Naive thymus-derived CD4-positive, alpha-beta T cell (primary cell): ENCODE measurements at regions of chr11 and their contacts with region 1.

Region 1: GRCh38 chr11:85595285-85595884 is 31.8 kb downstream of the DLG2 start:
- DNase-seq: peak in 7 of 9 donors; percentile 19 to 65 (median 49)
- ATAC-seq: peak; percentile 73
- H3K4me3 ChIP-seq: no peak overlapping the region
- H3K4me3 Mint-ChIP-seq: no peak overlapping the region
- H3K27ac ChIP-seq: no peak overlapping the region
- H3K27ac Mint-ChIP-seq: no peak overlapping the region
- H3K4me1 ChIP-seq: no peaks in the 10 kb centered on the region
- H3K4me1 Mint-ChIP-seq: no peaks in the 10 kb centered on the region
- H3K27me3 ChIP-seq: no peaks in the 10 kb centered on the region
- H3K27me3 Mint-ChIP-seq: peaks cover 0 to 19% (median 0%) of the 10 kb centered on the region in 5 donors

Region 2: GRCh38 chr11:84558085-84558905 is 1037.1 kb before region 1 on chr11:
- CTCF ChIA-PET with region 1: no interaction called
- POLR2A ChIA-PET with region 1: no interaction called
- intact Hi-C with region 1: loop called in 1 of 2 experiments (anchors 5 kb)
- DNase-seq: peak in 2 of 9 donors; percentile 1 to 11
- ATAC-seq: no peak
- H3K4me3 ChIP-seq: no peak overlapping the region
- H3K4me3 Mint-ChIP-seq: no peak overlapping the region
- H3K27ac ChIP-seq: no peak overlapping the region
- H3K27ac Mint-ChIP-seq: no peak overlapping the region
- H3K4me1 ChIP-seq: no peaks in the 10 kb centered on the region
- H3K4me1 Mint-ChIP-seq: no peaks in the 10 kb centered on the region
- H3K27me3 ChIP-seq: no peaks in the 10 kb centered on the region
- H3K27me3 Mint-ChIP-seq: no peaks in the 10 kb centered on the region

Region 3: GRCh38 chr11:85485902-85486301 is 109.5 kb before region 1 on chr11:
- CTCF ChIA-PET with region 1: no interaction called
- POLR2A ChIA-PET with region 1: no interaction called
- intact Hi-C with region 1: no loop called
- DNase-seq: no peak
- ATAC-seq: no peak
- H3K4me3 ChIP-seq: no peak overlapping the region
- H3K4me3 Mint-ChIP-seq: no peak overlapping the region
- H3K27ac ChIP-seq: no peak overlapping the region
- H3K27ac Mint-ChIP-seq: no peak overlapping the region
- H3K4me1 ChIP-seq: no peaks in the 10 kb centered on the region
- H3K4me1 Mint-ChIP-seq: no peaks in the 10 kb centered on the region
- H3K27me3 ChIP-seq: no peaks in the 10 kb centered on the region
- H3K27me3 Mint-ChIP-seq: no peaks in the 10 kb centered on the region

Region 4: GRCh38 chr11:85558411-85558810 is 37.0 kb before region 1 on chr11:
- CTCF ChIA-PET with region 1: no interaction called
- POLR2A ChIA-PET with region 1: no interaction called
- intact Hi-C with region 1: no loop called
- DNase-seq: no peak
- ATAC-seq: no peak
- H3K4me3 ChIP-seq: no peak overlapping the region
- H3K4me3 Mint-ChIP-seq: no peak overlapping the region
- H3K27ac ChIP-seq: no peak overlapping the region
- H3K27ac Mint-ChIP-seq: no peak overlapping the region
- H3K4me1 ChIP-seq: no peaks in the 10 kb centered on the region
- H3K4me1 Mint-ChIP-seq: no peaks in the 10 kb centered on the region
- H3K27me3 ChIP-seq: no peaks in the 10 kb centered on the region
- H3K27me3 Mint-ChIP-seq: peaks cover 0 to 10% (median 2%) of the 10 kb centered on the region in 5 donors

Region 5: GRCh38 chr11:85572056-85572455 is 23.3 kb before region 1 on chr11:
- CTCF ChIA-PET with region 1: no interaction called
- POLR2A ChIA-PET with region 1: no interaction called
- intact Hi-C with region 1: no loop called
- DNase-seq: no peak
- ATAC-seq: no peak
- H3K4me3 ChIP-seq: no peak overlapping the region
- H3K4me3 Mint-ChIP-seq: no peak overlapping the region
- H3K27ac ChIP-seq: no peak overlapping the region
- H3K27ac Mint-ChIP-seq: no peak overlapping the region
- H3K4me1 ChIP-seq: no peaks in the 10 kb centered on the region
- H3K4me1 Mint-ChIP-seq: peaks cover 0 to 4% (median 0%) of the 10 kb centered on the region in 7 donors
- H3K27me3 ChIP-seq: no peaks in the 10 kb centered on the region
- H3K27me3 Mint-ChIP-seq: peaks cover 3 to 27% (median 16%) of the 10 kb centered on the region in 5 donors

Region 6: DNA sequence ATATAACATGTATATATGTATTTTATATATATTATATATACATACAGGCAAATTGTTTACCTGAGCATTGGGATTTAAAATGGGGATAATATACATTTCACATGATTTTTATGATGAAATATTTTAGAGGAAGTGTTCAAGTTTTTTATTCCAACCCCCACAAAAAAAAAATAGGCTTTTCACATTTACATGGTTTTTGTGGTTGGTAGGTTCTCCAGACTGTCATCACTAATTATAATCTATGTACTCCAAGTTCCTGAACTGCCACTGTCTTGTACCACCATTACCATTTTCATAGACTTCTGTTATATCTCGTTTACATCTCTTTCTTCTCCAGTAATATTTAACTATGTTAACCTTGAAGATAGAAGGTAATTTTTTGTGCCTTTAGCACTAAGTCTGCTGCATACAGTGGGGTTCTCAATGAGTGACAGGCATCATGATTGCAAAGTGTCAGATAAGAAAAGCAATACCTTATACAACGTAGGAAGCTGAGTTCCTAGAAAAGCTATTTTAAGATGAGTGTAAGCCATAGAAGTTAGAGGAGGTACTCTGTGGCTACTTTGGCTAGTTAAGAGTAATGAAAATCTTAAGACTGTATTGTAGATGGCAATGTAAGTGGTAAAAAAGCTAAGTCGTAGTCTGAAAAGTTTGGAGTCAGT is 57.5 kb after region 1 on chr11:
- CTCF ChIA-PET with region 1: no interaction called
- POLR2A ChIA-PET with region 1: no interaction called
- intact Hi-C with region 1: no loop called
- DNase-seq: no peak
- ATAC-seq: no peak
- H3K4me3 ChIP-seq: no peak overlapping the region
- H3K4me3 Mint-ChIP-seq: no peak overlapping the region
- H3K27ac ChIP-seq: no peak overlapping the region
- H3K27ac Mint-ChIP-seq: peak overlapping the region in 4 of 9 donors; percentile 1 to 18 (median 10)
- H3K4me1 ChIP-seq: peaks cover 6 to 7% of the 10 kb centered on the region in 2 donors
- H3K4me1 Mint-ChIP-seq: peaks cover 10 to 58% (median 47%) of the 10 kb centered on the region in 7 donors
- H3K27me3 ChIP-seq: no peaks in the 10 kb centered on the region
- H3K27me3 Mint-ChIP-seq: no peaks in the 10 kb centered on the region

Region 7: GRCh38 chr11:85664615-85665481 is 69.5 kb after region 1 on chr11 and contains the start of gene CREBZF:
- CTCF ChIA-PET with region 1: no interaction called
- POLR2A ChIA-PET with region 1: no interaction called
- intact Hi-C with region 1: loop called (anchors 1 kb)
- DNase-seq: peak; percentile 83 to 96 (median 92)
- ATAC-seq: peak; percentile 85
- H3K4me3 ChIP-seq: peak within 1 kb of the TSS; percentile 97
- H3K4me3 Mint-ChIP-seq: peak within 1 kb of the TSS; percentile 93 to 100 (median 99)
- H3K27ac ChIP-seq: peak within 1 kb of the TSS; percentile 99
- H3K27ac Mint-ChIP-seq: peak within 1 kb of the TSS; percentile 96 to 100 (median 99)
- H3K4me1 ChIP-seq: peaks cover 19 to 31% of the 10 kb centered on the region in 2 donors
- H3K4me1 Mint-ChIP-seq: peaks cover 29 to 55% (median 39%) of the 10 kb centered on the region in 7 donors
- H3K27me3 ChIP-seq: no peaks in the 10 kb centered on the region
- H3K27me3 Mint-ChIP-seq: peaks cover 0 to 5% (median 0%) of the 10 kb centered on the region in 5 donors
- total RNA-seq, gene CREBZF: 56.9 to 114 (median 59.7) TPM

Region 8: GRCh38 chr11:85941380-85941973 is 346.1 kb after region 1 on chr11:
- CTCF ChIA-PET with region 1: no interaction called
- POLR2A ChIA-PET with region 1: no interaction called
- intact Hi-C with region 1: loop called in 1 of 2 experiments (anchors 10 kb)
- DNase-seq: no peak
- ATAC-seq: peak; percentile 61
- H3K4me3 ChIP-seq: no peak overlapping the region
- H3K4me3 Mint-ChIP-seq: no peak overlapping the region
- H3K27ac ChIP-seq: no peak overlapping the region
- H3K27ac Mint-ChIP-seq: no peak overlapping the region
- H3K4me1 ChIP-seq: no peaks in the 10 kb centered on the region
- H3K4me1 Mint-ChIP-seq: peaks cover 0 to 10% (median 0%) of the 10 kb centered on the region in 7 donors
- H3K27me3 ChIP-seq: no peaks in the 10 kb centered on the region
- H3K27me3 Mint-ChIP-seq: no peaks in the 10 kb centered on the region

Region 9: GRCh38 chr11:86041975-86042378 is 446.6 kb after region 1 on chr11:
- CTCF ChIA-PET with region 1: no interaction called
- POLR2A ChIA-PET with region 1: no interaction called
- intact Hi-C with region 1: loop called in 1 of 2 experiments (anchors 1 kb)
- DNase-seq: peak in 7 of 9 donors; percentile 63 to 79 (median 71)
- ATAC-seq: peak; percentile 98
- H3K4me3 ChIP-seq: no peak overlapping the region
- H3K4me3 Mint-ChIP-seq: peak overlapping the region in 4 of 10 donors; percentile 1 to 8 (median 5)
- H3K27ac ChIP-seq: peak overlapping the region; percentile 20
- H3K27ac Mint-ChIP-seq: peak overlapping the region in 7 of 9 donors; percentile 11 to 68 (median 38)
- H3K4me1 ChIP-seq: peaks cover 19 to 54% of the 10 kb centered on the region in 2 donors
- H3K4me1 Mint-ChIP-seq: peaks cover 49 to 73% (median 67%) of the 10 kb centered on the region in 7 donors
- H3K27me3 ChIP-seq: no peaks in the 10 kb centered on the region
- H3K27me3 Mint-ChIP-seq: no peaks in the 10 kb centered on the region

Region 10: DNA sequence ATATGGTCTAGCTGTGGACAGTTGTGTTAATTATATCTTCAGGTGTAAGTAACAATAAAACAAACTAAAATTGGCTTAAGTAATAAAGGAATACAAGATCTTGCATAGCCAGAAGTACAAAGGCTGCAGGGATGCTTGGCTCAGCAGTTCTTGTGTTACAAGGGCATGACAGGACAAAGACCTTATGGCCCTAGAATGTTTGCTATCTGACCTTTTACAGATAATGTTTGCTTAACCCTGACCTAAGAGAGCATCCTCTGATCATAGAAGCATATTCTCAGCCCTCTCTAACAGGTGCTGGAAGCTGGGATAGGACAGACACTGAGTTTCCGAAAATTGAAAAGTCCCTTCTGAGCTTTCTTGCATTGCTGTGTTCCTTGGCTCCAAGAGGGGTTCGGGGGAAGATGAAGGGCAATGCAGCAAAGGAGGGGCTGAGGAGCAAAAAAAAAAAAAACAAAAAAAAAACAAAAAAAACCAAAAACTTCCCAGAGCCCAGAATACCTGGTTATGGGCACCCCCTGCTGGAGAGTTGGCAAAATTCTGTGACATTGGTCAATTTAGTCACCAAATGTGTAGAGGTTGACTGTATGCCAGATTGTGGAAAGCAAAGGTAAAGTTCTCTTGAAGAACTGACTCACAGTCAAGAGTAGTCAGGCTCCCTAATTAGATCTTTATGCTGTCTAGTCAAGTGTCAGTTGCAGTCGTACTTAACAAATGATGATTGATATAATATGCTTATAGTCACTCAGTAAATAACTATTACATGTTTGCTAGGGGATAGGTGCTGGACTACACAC is 696.3 kb after region 1 on chr11:
- CTCF ChIA-PET with region 1: no interaction called
- POLR2A ChIA-PET with region 1: no interaction called
- intact Hi-C with region 1: loop called (anchors 1 kb)
- DNase-seq: peak; percentile 11 to 63 (median 49)
- ATAC-seq: peak; percentile 76
- H3K4me3 ChIP-seq: no peak overlapping the region
- H3K4me3 Mint-ChIP-seq: peak overlapping the region in 1 of 10 donors; percentile 23
- H3K27ac ChIP-seq: no peak overlapping the region
- H3K27ac Mint-ChIP-seq: peak overlapping the region in 1 of 9 donors; percentile 35
- H3K4me1 ChIP-seq: peaks cover 0 to 27% of the 10 kb centered on the region in 2 donors
- H3K4me1 Mint-ChIP-seq: peaks cover 5 to 47% (median 9%) of the 10 kb centered on the region in 7 donors
- H3K27me3 ChIP-seq: no peaks in the 10 kb centered on the region
- H3K27me3 Mint-ChIP-seq: no peaks in the 10 kb centered on the region

Region 11: GRCh38 chr11:86818466-86819192 is 1223.2 kb after region 1 on chr11:
- CTCF ChIA-PET with region 1: no interaction called
- POLR2A ChIA-PET with region 1: no interaction called
- intact Hi-C with region 1: loop called in 1 of 2 experiments (anchors 2 kb)
- DNase-seq: peak in 7 of 9 donors; percentile 13 to 42 (median 34)
- ATAC-seq: peak; percentile 56
- H3K4me3 ChIP-seq: no peak overlapping the region
- H3K4me3 Mint-ChIP-seq: no peak overlapping the region
- H3K27ac ChIP-seq: no peak overlapping the region
- H3K27ac Mint-ChIP-seq: peak overlapping the region in 1 of 9 donors; percentile 39
- H3K4me1 ChIP-seq: no peaks in the 10 kb centered on the region
- H3K4me1 Mint-ChIP-seq: peaks cover 0 to 7% (median 5%) of the 10 kb centered on the region in 7 donors
- H3K27me3 ChIP-seq: no peaks in the 10 kb centered on the region
- H3K27me3 Mint-ChIP-seq: peaks cover 3 to 31% (median 13%) of the 10 kb centered on the region in 5 donors